ENCODE measurements at regions of chr12 and their contacts with region 1.

Region 1: GRCh38 chr12:15789220-15790171 is at the start of gene EPS8:
- DNase-seq: peak; percentile 90
- ATAC-seq: peak; percentile 83
- H3K4me3 Mint-ChIP-seq: peak within 1 kb of the TSS; percentile 88
- H3K27ac Mint-ChIP-seq: peak within 1 kb of the TSS; percentile 51; the same call in 1 of the 2 replicates
- H3K4me1 Mint-ChIP-seq: peaks cover 15% of the 10 kb centered on the region
- H3K27me3 Mint-ChIP-seq: peaks cover 48% of the 10 kb centered on the region
- CTCF ChIP-seq: no peak
- total RNA-seq, gene EPS8: 3.9 to 7.5 TPM (median 5.0 TPM) in 3 replicates

Region 2: DNA sequence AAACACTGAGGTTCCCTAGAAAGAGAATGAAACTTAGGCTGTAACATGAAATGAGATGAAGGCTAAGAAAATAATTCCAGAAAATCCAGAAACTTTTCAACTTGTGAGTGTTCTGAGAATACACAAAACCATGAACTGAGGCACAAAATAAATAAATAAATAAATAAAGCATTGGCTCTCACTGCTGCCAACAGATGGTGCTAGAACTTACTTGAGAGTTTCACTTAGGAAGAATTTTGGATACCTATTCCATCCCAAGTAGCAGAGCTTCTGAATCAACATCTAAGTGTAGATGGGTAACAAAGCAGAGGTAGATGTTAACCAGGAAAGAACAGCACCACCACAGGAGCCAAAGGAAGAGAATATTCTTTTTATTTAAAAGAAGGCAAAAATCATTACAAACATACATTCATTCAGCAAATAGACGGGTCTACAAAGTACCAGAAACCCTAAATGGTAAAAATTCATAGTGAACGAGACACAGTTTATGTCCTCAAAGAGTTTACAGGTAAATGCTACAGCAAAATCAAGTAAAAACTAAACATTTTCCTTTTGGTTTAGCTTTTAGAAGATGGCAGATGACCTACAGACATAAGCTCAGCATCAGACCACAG is 17.0 kb before region 1 on chr12:
- CTCF ChIA-PET with region 1: interaction called, 12 read pairs
- POLR2A ChIA-PET with region 1: interaction called, 3 read pairs
- DNase-seq: no peak
- ATAC-seq: peak; percentile 58
- H3K4me3 Mint-ChIP-seq: no peak overlapping the region
- H3K27ac Mint-ChIP-seq: no peak overlapping the region
- H3K4me1 Mint-ChIP-seq: peaks cover 16% of the 10 kb centered on the region
- H3K27me3 Mint-ChIP-seq: no peaks in the 10 kb centered on the region
- CTCF ChIP-seq: no peak

Measured in WTC11 (cell line).